Stomach (tissue), 19 donors: ENCODE measurements at regions of chr1 and their contacts with region 1.

Region 1: GRCh38 chr1:203346060-203346768 is 4.7 kb downstream of the FMOD start:
- DNase-seq: no peak
- H3K4me3 ChIP-seq: no peak overlapping the region
- H3K27ac ChIP-seq: peak overlapping the region in 4 of 5 donors; percentile 30 to 48 (median 38)
- H3K4me1 ChIP-seq: peaks cover 30 to 77% (median 54%) of the 10 kb centered on the region in 4 donors
- H3K27me3 ChIP-seq: no peaks in the 10 kb centered on the region
- CTCF ChIP-seq: peak in 1 of 7 experiments; percentile 6
- EP300 ChIP-seq: no peak
- POLR2A ChIP-seq: no peak

Region 2: DNA sequence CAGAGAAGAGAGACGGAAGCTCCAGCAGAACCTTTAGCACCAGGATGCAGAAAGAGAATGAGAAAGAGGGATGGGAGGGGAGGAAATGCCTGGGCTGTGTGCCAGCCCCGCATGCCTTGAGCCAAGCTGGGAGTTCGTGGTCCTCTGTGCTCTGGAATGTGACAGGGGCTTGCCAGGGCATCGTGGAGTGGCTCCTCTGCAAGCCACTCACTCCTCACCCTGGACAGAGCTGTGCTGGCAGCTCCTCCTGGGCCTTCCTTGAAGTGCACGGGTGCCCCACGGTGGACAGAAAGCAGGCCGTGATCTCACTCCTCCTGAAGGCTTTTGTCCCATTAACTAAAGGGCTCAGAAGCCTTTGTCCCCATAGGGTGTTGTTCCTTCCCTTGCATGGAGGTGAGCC is 94.6 kb after region 1 on chr1:
- intact Hi-C with region 1: loop called (anchors 5 kb)
- DNase-seq: peak; percentile 75 to 86
- H3K4me3 ChIP-seq: no peak overlapping the region
- H3K27ac ChIP-seq: peak overlapping the region in 1 of 5 donors; percentile 36
- H3K4me1 ChIP-seq: peaks cover 0 to 26% (median 19%) of the 10 kb centered on the region in 4 donors
- H3K27me3 ChIP-seq: peaks cover 0 to 5% (median 0%) of the 10 kb centered on the region in 3 donors
- CTCF ChIP-seq: peak in 5 of 7 experiments; percentile 40 to 65 (median 51)
- EP300 ChIP-seq: no peak
- POLR2A ChIP-seq: no peak